Caco-2 (cell line): ENCODE measurements at regions of chr10 and their contacts with region 1.

Region 1: DNA sequence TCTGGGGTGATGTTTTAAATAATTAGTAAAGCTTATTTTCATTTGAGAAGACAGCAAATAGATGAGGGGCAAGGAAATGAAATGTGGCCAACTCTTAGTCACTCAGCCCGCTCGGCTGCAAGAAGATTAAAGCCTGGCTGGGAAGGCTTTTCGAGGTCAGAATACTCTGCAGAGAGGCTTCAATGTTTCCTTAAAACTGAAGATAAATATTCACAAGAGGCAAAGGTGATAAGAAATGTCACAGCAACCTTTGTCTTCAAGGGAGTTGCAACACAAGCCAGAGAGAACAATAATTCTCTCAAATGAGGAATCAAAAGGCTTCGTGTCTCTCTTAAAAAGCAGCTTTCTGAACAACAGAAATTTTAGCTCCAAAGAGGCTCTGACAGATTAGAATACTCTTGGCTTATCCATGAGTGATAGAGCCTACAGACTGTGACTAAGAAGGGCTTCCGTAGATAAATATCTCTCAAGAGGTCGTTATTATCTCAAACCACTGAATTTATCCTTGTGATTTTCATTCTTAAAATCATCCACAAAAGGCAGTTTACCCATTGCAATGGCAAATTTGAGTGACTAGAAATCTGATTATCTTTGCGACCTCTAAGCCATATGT is 92.5 kb downstream of the KLF6 start:
- DNase-seq: peak in 1 of 2 experiments; percentile 27
- H3K4me3 ChIP-seq: no peak overlapping the region
- H3K4me3 Mint-ChIP-seq: peak overlapping the region; percentile 22
- H3K27ac Mint-ChIP-seq: peak overlapping the region; percentile 50
- H3K4me1 ChIP-seq: peaks cover 25% of the 10 kb centered on the region
- H3K4me1 Mint-ChIP-seq: peaks cover 15% of the 10 kb centered on the region
- H3K27me3 ChIP-seq: no peaks in the 10 kb centered on the region
- H3K27me3 Mint-ChIP-seq: no peaks in the 10 kb centered on the region
- CTCF ChIP-seq: no peak

Region 2: DNA sequence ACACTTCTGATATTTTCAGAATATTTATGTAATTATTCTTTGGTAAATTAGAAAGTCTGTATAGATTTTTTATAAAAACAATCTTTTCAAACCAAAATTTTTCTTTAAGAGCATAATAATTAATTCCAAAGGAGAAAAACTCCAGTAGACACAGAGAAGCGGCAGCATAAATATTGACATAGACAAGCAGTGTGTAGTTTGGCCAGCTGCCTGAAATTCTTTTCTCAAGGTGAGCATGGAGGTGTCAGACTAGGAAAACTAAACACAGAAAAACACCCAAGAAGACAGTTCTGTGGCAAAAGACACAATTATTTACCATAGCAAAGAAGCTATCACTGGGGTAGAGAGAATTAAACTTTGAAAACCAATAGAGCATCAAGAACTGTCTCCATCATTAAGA is 10.1 kb after region 1 on chr10:
- CTCF ChIA-PET with region 1: interaction called, 3 read pairs
- POLR2A ChIA-PET with region 1: no interaction called
- intact Hi-C with region 1: loop called (anchors 1 kb)
- DNase-seq: peak in 1 of 2 experiments; percentile 24
- H3K4me3 ChIP-seq: no peak overlapping the region
- H3K4me3 Mint-ChIP-seq: no peak overlapping the region
- H3K27ac Mint-ChIP-seq: no peak overlapping the region
- H3K4me1 ChIP-seq: peaks cover 23% of the 10 kb centered on the region
- H3K4me1 Mint-ChIP-seq: peaks cover 24% of the 10 kb centered on the region
- H3K27me3 ChIP-seq: no peaks in the 10 kb centered on the region
- H3K27me3 Mint-ChIP-seq: no peaks in the 10 kb centered on the region
- CTCF ChIP-seq: no peak

Region 3: DNA sequence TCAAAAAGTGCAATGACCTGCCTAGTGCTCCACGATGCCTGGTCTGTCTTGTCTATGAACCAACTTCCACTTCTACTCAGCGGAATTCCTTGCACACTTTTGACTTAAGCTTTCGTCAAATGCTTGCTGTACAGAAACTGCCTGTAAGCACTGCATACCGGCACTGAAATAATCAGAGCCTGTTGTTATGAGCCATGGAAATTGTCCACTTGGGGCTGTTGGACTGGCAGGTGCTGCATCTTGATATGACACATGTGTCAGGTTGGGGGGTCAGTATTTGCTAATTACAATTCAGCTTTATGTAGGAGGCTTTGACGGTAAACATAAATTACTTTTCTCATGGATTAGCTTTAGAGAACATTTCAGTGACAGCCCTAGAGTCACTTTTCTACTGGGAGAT is 124.5 kb after region 1 on chr10:
- CTCF ChIA-PET with region 1: no interaction called
- POLR2A ChIA-PET with region 1: no interaction called
- intact Hi-C with region 1: no loop called
- DNase-seq: no peak
- H3K4me3 ChIP-seq: no peak overlapping the region
- H3K4me3 Mint-ChIP-seq: no peak overlapping the region
- H3K27ac Mint-ChIP-seq: no peak overlapping the region
- H3K4me1 ChIP-seq: peaks cover 44% of the 10 kb centered on the region
- H3K4me1 Mint-ChIP-seq: peaks cover 49% of the 10 kb centered on the region
- H3K27me3 ChIP-seq: no peaks in the 10 kb centered on the region
- H3K27me3 Mint-ChIP-seq: no peaks in the 10 kb centered on the region
- CTCF ChIP-seq: no peak

Region 4: DNA sequence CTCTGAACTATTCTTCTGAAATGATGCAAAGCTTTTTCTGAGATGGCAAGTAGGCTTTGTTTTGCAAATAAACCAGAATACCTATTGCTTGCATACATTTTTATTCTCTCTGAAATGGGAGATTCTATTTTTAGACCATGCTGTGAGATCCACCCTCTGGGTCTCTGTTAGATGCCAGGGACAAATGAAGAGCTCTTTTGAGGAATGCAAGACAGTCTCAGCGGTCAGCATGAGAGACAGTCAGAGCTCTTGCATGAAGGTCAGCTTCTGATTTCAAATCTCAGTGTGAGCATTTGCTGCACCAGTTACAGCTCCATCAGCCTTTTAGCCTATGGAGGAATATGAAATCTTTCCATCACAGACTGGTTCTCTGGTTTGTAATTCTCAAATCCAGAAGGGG is 522.4 kb after region 1 on chr10:
- CTCF ChIA-PET with region 1: no interaction called
- POLR2A ChIA-PET with region 1: no interaction called
- intact Hi-C with region 1: no loop called
- DNase-seq: no peak
- H3K4me3 ChIP-seq: no peak overlapping the region
- H3K4me3 Mint-ChIP-seq: no peak overlapping the region
- H3K27ac Mint-ChIP-seq: no peak overlapping the region
- H3K4me1 ChIP-seq: no peaks in the 10 kb centered on the region
- H3K4me1 Mint-ChIP-seq: no peaks in the 10 kb centered on the region
- H3K27me3 ChIP-seq: no peaks in the 10 kb centered on the region
- H3K27me3 Mint-ChIP-seq: peaks cover 15% of the 10 kb centered on the region
- CTCF ChIP-seq: no peak